ENCODE measurements at regions of chr10 and their contacts with region 1.

Region 1: DNA sequence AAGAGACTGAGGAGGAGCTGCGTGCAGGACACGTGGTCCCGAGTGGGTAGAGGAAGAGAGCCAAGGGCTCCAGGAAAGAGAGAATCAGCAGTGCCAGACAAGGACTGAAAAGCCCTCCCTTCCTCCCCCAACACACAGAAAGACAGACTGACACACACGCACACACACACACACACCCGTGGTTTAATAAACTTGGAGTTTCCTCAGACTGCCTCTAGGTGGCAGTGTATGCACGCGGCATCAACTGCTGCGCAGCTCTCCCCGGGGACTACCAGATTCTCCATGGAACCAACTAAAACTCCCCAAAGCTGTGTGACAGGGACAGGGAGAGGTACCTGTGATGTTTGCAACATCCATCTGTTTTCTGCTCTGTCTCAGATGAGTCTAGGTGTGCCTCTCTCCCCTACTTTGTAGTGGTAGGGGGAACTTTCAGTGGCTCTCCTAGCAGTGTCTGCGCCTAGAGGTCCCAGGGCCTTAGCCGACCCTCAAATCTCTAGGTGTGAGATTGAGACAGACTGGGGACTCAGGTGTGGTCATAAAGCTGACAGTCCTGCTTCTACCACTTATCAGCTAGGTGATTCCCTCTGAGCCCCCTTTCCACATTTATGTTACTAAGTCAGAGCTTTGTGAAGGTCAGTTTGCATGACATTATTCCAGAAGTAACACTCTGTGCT is 9.3 kb upstream of the TSPAN14 start:
- DNase-seq: no peak
- H3K4me3 ChIP-seq: no peak overlapping the region
- H3K27me3 ChIP-seq: 0 out of 2 replicates have a peak, but pooled peaks cover 1% of the 10 kb centered on the region
- CTCF ChIP-seq: peak; percentile 90

Region 2: GRCh38 chr10:80429521-80429966 is 15.2 kb before region 1 on chr10:
- CTCF ChIA-PET with region 1: interaction called, 58 read pairs
- POLR2A ChIA-PET with region 1: no interaction called
- DNase-seq: no peak
- H3K4me3 ChIP-seq: no peak overlapping the region
- H3K27me3 ChIP-seq: peaks cover 1% of the 10 kb centered on the region; the same call in 1 of the 2 replicates
- CTCF ChIP-seq: no peak

Region 3: DNA sequence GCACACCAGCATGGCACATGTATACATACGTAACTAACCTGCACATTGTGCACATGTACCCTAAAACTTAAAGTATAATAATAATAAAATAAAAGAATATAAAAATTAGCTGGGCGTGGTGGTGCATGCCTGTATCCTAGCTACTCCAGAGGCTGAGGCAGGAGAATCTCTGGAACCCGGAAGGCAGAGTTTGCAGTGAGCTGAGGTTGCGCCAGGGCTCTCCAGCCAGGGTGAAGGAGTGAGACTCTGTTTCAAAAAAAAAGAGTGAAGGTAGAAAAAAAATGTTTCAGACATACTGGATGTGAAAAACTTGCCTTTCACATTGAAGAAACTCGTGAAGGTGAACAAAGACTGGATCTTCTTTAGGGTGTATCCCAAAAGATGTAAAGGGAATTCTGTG is 36.1 kb after region 1 on chr10:
- CTCF ChIA-PET with region 1: no interaction called
- POLR2A ChIA-PET with region 1: no interaction called
- DNase-seq: no peak
- H3K4me3 ChIP-seq: no peak overlapping the region
- H3K27me3 ChIP-seq: no peaks in the 10 kb centered on the region
- CTCF ChIP-seq: no peak

Region 4: GRCh38 chr10:80498833-80499741 is 54.3 kb after region 1 on chr10:
- CTCF ChIA-PET with region 1: interaction called, 661 read pairs
- POLR2A ChIA-PET with region 1: no interaction called
- DNase-seq: peak; percentile 90
- H3K4me3 ChIP-seq: no peak overlapping the region
- H3K27me3 ChIP-seq: no peaks in the 10 kb centered on the region
- CTCF ChIP-seq: 0 out of 2 replicates have a peak, but pooled peaks have one; percentile 14

Region 5: DNA sequence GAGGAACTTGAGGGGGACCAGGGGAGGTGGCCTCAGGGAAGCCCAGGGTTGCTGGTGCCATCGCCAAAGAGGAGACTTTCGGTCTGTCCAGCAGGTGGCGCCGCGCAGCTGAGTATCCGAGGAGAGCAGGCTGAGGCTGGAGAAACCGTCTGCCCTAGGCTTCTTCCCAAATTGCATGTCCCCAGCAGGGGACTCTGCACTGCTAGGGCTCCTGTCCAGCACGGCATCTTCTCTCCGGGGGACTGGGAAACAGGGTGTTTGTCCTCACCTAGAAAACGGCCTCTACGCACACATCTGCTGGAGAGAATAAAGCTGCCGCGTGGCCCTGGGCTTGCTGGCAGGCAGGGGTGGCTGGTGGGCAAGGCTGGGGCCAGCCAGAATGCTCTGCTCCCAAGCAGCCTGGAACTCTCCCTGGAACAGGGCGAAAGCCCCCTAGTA is 254.8 kb after region 1 on chr10:
- CTCF ChIA-PET with region 1: interaction called, 15 read pairs
- POLR2A ChIA-PET with region 1: no interaction called
- DNase-seq: no peak
- H3K4me3 ChIP-seq: no peak overlapping the region
- H3K27me3 ChIP-seq: no peaks in the 10 kb centered on the region
- CTCF ChIP-seq: peak; percentile 92

Measured in BJ (cell line).